Panc1 (cell line): ENCODE measurements at regions of chr5 and their contacts with region 1.

Region 1: GRCh38 chr5:24367211-24367610 is 277.6 kb downstream of the CDH10 start:
- DNase-seq: no peak
- ATAC-seq: no peak
- H3K4me3 ChIP-seq: no peak overlapping the region
- H3K27ac ChIP-seq: no peak overlapping the region
- H3K4me1 ChIP-seq: no peaks in the 10 kb centered on the region
- H3K27me3 ChIP-seq: no peaks in the 10 kb centered on the region
- CTCF ChIP-seq: no peak

Region 2: GRCh38 chr5:24385617-24386016 is 18.4 kb after region 1 on chr5:
- CTCF ChIA-PET with region 1: no interaction called
- POLR2A ChIA-PET with region 1: no interaction called
- in situ Hi-C with region 1: no loop called
- intact Hi-C with region 1: loop called (anchors 2 kb)
- DNase-seq: no peak
- ATAC-seq: no peak
- H3K4me3 ChIP-seq: no peak overlapping the region
- H3K27ac ChIP-seq: no peak overlapping the region
- H3K4me1 ChIP-seq: no peaks in the 10 kb centered on the region
- H3K27me3 ChIP-seq: no peaks in the 10 kb centered on the region
- CTCF ChIP-seq: no peak

Region 3: GRCh38 chr5:24472518-24472917 is 105.3 kb after region 1 on chr5:
- CTCF ChIA-PET with region 1: no interaction called
- POLR2A ChIA-PET with region 1: no interaction called
- in situ Hi-C with region 1: no loop called
- intact Hi-C with region 1: no loop called
- DNase-seq: no peak
- ATAC-seq: no peak
- H3K4me3 ChIP-seq: no peak overlapping the region
- H3K27ac ChIP-seq: no peak overlapping the region
- H3K4me1 ChIP-seq: no peaks in the 10 kb centered on the region
- H3K27me3 ChIP-seq: no peaks in the 10 kb centered on the region
- CTCF ChIP-seq: no peak